ENCODE measurements at regions of chr15 and their contacts with region 1.

Region 1: GRCh38 chr15:68578980-68579935 is at the start of gene CORO2B:
- DNase-seq: peak in 1 of 2 experiments; percentile 83
- H3K4me3 ChIP-seq: peak within 1 kb of the TSS; percentile 37 to 81 (median 66)
- H3K27ac ChIP-seq: no peak within 1 kb of the TSS
- H3K4me1 ChIP-seq: peaks cover 3 to 25% (median 13%) of the 10 kb centered on the region in 4 experiments
- H3K27me3 ChIP-seq: peaks cover 0 to 31% (median 25%) of the 10 kb centered on the region in 4 experiments; a peak in 6 of 7 replicates
- CTCF ChIP-seq: no peak
- EP300 ChIP-seq: no peak
- POLR2A ChIP-seq: no peak
- RAD21 ChIP-seq: no peak
- total RNA-seq, gene CORO2B: 3.4 and 4.7 TPM in 2 replicates

Region 2: DNA sequence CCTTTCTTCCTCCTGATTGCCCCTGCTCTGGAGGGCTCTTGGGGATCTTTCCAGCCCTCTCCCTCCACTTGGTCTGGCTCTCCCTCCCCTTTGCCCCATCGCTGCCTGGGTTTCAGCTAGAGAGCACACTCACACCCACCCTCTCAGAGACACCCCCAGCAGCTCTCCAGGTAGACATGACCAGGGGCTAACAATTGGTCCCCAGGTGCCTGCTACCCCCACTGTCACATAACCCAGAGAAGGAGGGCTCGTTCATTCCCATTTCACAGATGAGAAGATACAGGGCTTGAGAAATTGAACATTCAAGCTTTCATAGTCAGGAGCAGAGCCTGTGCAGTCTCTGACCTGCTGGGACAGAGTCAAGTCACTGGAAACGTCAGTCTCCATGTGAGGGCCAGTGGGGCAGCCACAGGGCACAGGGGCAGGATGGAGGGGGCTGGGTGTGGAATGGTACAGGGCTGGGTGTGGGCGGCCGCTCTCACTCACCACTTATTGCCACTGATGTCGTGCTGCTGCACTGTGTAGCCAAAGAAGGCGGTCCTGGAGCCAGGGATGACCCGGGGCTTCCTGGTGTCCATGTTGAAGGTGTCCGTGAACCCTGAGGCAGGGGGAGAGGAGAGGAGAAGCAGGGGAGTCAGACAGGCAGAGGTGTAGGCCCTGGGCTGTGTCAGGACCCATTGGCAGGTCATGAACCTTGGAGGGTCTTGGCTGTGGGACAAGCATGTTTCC is 176.7 kb before region 1 on chr15:
- CTCF ChIA-PET with region 1: no interaction called
- POLR2A ChIA-PET with region 1: no interaction called
- DNase-seq: no peak
- H3K4me3 ChIP-seq: no peak overlapping the region
- H3K27ac ChIP-seq: no peak overlapping the region
- H3K4me1 ChIP-seq: no peaks in the 10 kb centered on the region
- H3K27me3 ChIP-seq: no peaks in the 10 kb centered on the region
- CTCF ChIP-seq: no peak
- EP300 ChIP-seq: no peak
- POLR2A ChIP-seq: no peak
- RAD21 ChIP-seq: no peak

Region 3: GRCh38 chr15:68536331-68537095 is 42.7 kb before region 1 on chr15:
- CTCF ChIA-PET with region 1: no interaction called
- POLR2A ChIA-PET with region 1: no interaction called
- DNase-seq: no peak
- H3K4me3 ChIP-seq: no peak overlapping the region
- H3K27ac ChIP-seq: no peak overlapping the region
- H3K4me1 ChIP-seq: no peaks in the 10 kb centered on the region
- H3K27me3 ChIP-seq: no peaks in the 10 kb centered on the region
- CTCF ChIP-seq: no peak
- EP300 ChIP-seq: no peak
- POLR2A ChIP-seq: no peak
- RAD21 ChIP-seq: no peak

Region 4: DNA sequence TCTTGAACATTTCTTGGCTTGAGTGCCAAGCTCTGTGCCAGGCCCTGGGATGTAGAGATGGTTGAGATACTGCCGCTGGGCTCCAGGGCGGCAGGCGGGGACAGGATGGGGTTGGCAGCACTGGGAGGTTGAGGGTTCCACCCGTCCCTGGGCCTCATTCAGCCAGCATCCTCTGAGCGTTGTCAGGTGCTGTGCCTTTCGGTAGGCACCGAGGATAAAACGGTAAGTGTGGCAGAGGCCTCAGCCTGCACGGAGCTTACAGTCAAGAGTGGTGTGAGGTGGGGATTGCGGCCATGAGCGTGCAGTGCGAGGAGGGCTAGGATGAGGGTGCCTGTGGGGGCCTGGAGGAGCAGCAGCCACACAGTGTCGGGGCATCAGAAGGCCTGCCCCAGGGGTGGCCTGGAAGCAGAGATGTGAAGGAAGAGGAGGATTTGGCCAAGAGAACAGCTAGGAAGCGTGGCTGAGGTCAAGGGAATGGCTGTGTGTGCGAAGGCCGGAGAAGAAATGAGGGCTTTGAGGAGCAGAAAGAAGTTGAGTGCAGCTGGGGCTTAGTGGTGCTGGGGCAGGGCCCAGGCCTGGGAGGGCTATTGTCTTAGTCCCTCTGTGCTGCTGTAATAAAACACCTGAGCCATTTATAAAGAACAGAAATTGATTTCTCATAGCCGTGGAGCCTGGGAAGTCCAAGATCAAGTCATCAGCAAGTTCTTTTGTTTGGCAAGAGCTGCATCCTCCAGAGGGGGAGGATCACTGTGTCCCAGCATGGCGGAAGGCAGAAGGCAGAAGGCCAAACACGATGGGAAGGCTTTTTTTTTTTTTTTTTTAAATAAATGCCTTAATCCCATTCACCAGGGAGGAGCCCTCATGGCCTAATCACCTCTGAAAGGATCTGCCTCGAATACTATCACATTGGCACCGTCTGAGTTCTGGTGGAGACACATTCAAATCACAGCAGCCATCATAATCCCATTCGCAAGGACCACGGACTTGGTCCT is 22.2 kb after region 1 on chr15:
- CTCF ChIA-PET with region 1: interaction called, 10 read pairs
- POLR2A ChIA-PET with region 1: interaction called, 3 read pairs
- DNase-seq: no peak
- H3K4me3 ChIP-seq: no peak overlapping the region
- H3K27ac ChIP-seq: no peak overlapping the region
- H3K4me1 ChIP-seq: peaks cover 5 to 36% (median 24%) of the 10 kb centered on the region in 4 experiments
- H3K27me3 ChIP-seq: no peaks in the 10 kb centered on the region; a peak in 2 of 7 replicates
- CTCF ChIP-seq: no peak
- EP300 ChIP-seq: no peak
- POLR2A ChIP-seq: no peak
- RAD21 ChIP-seq: no peak

Measured in H1 (cell line).